ENCODE measurements at regions of chr11 and their contacts with region 1.

Region 1: DNA sequence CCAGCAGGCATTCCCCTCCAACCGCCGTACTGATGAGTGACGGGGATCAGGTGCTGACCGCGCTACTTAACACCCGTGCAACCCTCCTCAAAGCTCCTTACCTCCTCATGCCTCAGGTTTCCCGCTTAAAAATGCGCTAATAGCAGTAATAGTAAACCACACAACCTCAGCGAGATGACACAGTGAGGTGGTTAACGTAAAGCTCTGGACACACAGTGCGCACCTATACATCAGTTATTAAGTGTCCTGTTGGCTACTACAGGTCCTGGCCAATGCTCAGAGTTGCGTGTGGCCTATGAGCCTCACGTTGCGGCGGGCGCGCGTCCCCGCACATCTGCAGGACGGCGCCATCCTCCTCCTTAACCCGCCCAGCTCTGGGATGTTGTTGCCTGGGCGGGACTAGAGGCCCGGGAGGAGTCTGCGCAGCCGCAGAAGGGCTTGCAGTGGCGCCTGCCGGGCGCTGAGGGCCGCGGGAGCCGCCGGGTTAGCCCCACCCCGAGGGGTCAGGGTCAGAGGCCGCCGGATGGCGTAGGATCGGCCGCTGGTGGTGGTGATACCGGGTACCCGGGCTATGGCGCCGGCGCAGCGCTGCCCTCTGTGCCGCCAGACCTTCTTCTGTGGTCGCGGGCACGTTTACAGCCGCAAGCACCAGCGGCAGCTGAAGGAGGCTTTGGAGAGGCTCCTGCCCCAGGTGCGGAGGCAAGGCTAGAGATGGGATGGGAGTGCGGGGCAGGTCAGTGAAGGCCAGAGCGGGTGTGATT is at the start of gene CENATAC:
- DNase-seq: peak; percentile 86 to 92
- ATAC-seq: peak; percentile 95 to 98
- H3K4me3 ChIP-seq: peak within 1 kb of the TSS; percentile 97
- H3K27ac ChIP-seq: peak within 1 kb of the TSS; percentile 88 to 96
- H3K4me1 ChIP-seq: peaks cover 28% of the 10 kb centered on the region
- CTCF ChIP-seq: no peak
- EP300 ChIP-seq: no peak
- POLR2A ChIP-seq: peak; percentile 92
- RAD21 ChIP-seq: no peak
- polyA plus RNA-seq, gene CENATAC: 14.8 and 20.2 TPM in 2 replicates

Region 2: GRCh38 chr11:119018074-119018938 is 20.5 kb after region 1 on chr11 and contains the starts of genes RPS25 and TRAPPC4:
- CTCF ChIA-PET with region 1: interaction called, 6 read pairs
- POLR2A ChIA-PET with region 1: interaction called, 10 read pairs
- DNase-seq: peak; percentile 84 to 95
- ATAC-seq: peak; percentile 94 to 97
- H3K4me3 ChIP-seq: peak within 1 kb of the TSS; percentile 72
- H3K27ac ChIP-seq: peak within 1 kb of the TSS; percentile 95 to 97
- H3K4me1 ChIP-seq: peaks cover 40% of the 10 kb centered on the region
- CTCF ChIP-seq: no peak
- EP300 ChIP-seq: no peak
- POLR2A ChIP-seq: peak; percentile 60
- RAD21 ChIP-seq: no peak
- polyA plus RNA-seq, gene RPS25: 644 and 844 TPM in 2 replicates
- polyA plus RNA-seq, gene TRAPPC4: 77.7 and 90.0 TPM in 2 replicates

Region 3: DNA sequence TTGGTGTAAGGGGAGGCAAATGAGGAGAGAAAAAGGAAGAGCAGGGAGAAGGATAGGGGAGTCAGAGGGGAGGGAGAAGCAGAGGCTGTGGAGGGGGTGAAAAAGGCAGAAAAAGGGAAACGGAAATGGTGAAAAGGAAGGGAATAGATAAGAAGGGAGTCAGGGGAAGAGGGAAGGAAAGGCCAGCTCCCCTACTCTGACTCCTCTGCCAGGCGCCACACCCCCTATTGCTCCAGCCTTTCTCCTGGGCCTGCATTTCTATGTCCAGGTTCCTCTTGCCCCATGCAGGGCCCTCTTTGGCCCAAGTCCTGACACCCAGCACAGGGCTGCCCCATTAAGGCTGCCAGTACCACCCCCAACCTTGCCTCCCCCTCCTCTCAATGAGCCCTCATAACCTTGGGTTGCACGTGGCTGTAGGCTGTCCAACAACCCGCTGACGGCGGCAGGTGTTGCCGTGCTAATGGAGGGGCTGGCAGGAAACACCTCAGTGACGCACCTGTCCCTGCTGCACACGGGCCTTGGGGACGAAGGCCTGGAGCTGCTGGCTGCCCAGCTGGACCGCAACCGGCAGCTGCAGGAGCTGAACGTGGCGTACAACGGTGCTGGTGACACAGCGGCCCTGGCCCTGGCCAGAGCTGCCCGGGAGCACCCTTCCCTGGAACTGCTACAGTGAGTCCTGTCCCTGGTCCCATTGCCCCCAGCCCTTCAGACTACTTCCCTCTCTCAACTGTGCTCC is 184.0 kb after region 1 on chr11:
- CTCF ChIA-PET with region 1: no interaction called
- POLR2A ChIA-PET with region 1: no interaction called
- DNase-seq: no peak
- ATAC-seq: 0 out of 6 replicates have a peak, but pooled peaks of 1 of the 2 experiments have one; percentile 19
- H3K4me3 ChIP-seq: no peak overlapping the region
- H3K27ac ChIP-seq: no peak overlapping the region
- H3K4me1 ChIP-seq: peaks cover 13% of the 10 kb centered on the region
- CTCF ChIP-seq: no peak
- EP300 ChIP-seq: no peak
- POLR2A ChIP-seq: no peak
- RAD21 ChIP-seq: no peak